AG04449 (cell line): ENCODE measurements at regions of chr10 and their contacts with region 1.

Region 1: GRCh38 chr10:43292755-43293676 is 26.2 kb upstream of the RASGEF1A start:
- DNase-seq: no peak
- H3K4me3 ChIP-seq: no peak overlapping the region
- CTCF ChIP-seq: peak; percentile 82

Region 2: GRCh38 chr10:43231523-43232078 is 61.4 kb before region 1 on chr10:
- CTCF ChIA-PET with region 1: no interaction called
- POLR2A ChIA-PET with region 1: no interaction called
- DNase-seq: no peak
- H3K4me3 ChIP-seq: no peak overlapping the region
- CTCF ChIP-seq: no peak

Region 3: DNA sequence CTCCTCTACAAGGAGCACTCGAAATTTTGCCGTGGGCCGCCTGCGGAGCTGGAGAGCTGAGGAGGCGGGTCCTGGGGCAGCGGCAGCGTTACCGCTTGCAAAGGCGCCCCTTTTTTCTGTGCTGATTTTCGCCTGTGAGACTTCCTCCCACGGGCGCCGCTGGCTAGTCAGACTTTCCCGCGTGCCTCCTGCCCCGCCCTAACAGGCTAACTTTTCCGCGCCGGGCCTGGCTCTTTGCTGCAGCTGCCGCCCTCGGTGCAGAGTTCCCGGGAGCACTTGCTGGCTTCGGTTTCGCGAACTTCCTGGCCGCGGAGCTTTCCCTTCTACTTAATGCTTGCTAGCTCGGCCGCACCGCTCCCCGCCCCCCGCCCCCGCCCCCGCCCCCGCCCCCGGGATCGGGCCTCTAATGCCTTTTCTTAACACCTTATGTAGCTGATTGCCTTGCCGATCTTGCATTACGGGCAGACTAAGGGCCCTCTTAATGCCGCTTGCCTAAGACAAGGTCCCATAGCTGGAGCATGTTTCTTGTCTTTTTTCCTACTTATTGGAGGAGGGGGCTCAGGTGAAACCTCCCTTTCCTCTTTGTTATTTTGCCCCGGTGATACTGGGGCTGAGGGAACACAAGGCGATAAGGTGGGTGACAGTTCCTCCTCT is 11.8 kb after region 1 on chr10:
- CTCF ChIA-PET with region 1: interaction called, 26 read pairs
- POLR2A ChIA-PET with region 1: no interaction called
- DNase-seq: no peak
- H3K4me3 ChIP-seq: peak overlapping the region; percentile 44
- CTCF ChIP-seq: no peak

Region 4: DNA sequence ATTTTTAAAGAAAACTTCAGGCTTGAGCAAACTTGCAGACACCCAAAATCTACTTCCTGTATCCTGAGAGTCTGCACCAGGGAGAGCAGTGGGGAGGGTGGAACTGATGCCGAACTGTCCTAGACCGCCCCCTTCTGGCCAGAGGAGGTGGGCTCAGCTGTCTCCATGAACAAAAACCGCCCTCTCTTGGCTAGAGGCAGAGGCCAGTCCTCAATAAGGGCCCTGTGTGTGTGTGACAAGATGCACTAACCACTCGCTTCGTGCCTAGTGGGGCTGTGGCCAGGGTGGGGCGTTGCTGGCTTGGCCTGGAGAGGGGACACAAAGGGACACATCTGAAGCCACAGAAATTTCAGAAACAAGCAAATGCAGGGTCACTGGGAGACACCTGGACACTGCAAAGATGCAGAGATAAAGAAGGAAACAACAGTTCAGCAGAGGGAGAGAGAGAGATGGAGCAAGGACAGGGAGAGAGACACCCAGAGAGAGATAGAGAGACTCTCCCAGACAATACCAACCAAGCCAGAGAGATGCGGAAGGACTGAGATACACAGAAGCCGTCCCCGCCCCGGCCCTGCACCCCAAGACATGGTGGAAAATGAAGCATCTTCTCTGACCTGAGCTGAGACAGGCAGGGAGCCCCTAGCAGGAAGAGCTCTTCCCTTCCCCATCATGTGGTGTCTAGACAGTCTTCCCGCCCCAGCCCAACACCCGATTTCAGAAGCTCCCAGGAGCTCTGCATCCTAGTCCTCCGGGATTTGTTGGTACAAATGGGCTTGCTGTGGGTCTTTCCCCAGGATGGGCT is 55.7 kb after region 1 on chr10:
- CTCF ChIA-PET with region 1: interaction called, 21 read pairs
- POLR2A ChIA-PET with region 1: no interaction called
- DNase-seq: no peak
- H3K4me3 ChIP-seq: no peak overlapping the region
- CTCF ChIP-seq: peak; percentile 96

Region 5: GRCh38 chr10:43502931-43503330 is 209.9 kb after region 1 on chr10:
- CTCF ChIA-PET with region 1: no interaction called
- POLR2A ChIA-PET with region 1: no interaction called
- DNase-seq: no peak
- H3K4me3 ChIP-seq: no peak overlapping the region
- CTCF ChIP-seq: no peak

Region 6: GRCh38 chr10:43574001-43574892 is 281.2 kb after region 1 on chr10 and contains the start of gene ZNF239:
- CTCF ChIA-PET with region 1: no interaction called
- POLR2A ChIA-PET with region 1: no interaction called
- DNase-seq: peak; percentile 29
- H3K4me3 ChIP-seq: peak within 1 kb of the TSS; percentile 67
- CTCF ChIP-seq: no peak